ENCODE measurements at regions of chr1 and their contacts with region 1.

Region 1: GRCh38 chr1:178612261-178612660 is 99.4 kb downstream of the TEX35 start:
- DNase-seq: no peak
- H3K4me3 ChIP-seq: no peak overlapping the region
- H3K27ac ChIP-seq: peak overlapping the region; percentile 96
- H3K27me3 ChIP-seq: no peaks in the 10 kb centered on the region
- CTCF ChIP-seq: no peak

Region 2: GRCh38 chr1:178532392-178532791 is 79.9 kb before region 1 on chr1:
- CTCF ChIA-PET with region 1: no interaction called
- POLR2A ChIA-PET with region 1: interaction called, 12 read pairs
- DNase-seq: peak; percentile 63
- H3K4me3 ChIP-seq: no peak overlapping the region
- H3K27ac ChIP-seq: no peak overlapping the region
- H3K27me3 ChIP-seq: no peaks in the 10 kb centered on the region
- CTCF ChIP-seq: peak; percentile 90

Region 3: DNA sequence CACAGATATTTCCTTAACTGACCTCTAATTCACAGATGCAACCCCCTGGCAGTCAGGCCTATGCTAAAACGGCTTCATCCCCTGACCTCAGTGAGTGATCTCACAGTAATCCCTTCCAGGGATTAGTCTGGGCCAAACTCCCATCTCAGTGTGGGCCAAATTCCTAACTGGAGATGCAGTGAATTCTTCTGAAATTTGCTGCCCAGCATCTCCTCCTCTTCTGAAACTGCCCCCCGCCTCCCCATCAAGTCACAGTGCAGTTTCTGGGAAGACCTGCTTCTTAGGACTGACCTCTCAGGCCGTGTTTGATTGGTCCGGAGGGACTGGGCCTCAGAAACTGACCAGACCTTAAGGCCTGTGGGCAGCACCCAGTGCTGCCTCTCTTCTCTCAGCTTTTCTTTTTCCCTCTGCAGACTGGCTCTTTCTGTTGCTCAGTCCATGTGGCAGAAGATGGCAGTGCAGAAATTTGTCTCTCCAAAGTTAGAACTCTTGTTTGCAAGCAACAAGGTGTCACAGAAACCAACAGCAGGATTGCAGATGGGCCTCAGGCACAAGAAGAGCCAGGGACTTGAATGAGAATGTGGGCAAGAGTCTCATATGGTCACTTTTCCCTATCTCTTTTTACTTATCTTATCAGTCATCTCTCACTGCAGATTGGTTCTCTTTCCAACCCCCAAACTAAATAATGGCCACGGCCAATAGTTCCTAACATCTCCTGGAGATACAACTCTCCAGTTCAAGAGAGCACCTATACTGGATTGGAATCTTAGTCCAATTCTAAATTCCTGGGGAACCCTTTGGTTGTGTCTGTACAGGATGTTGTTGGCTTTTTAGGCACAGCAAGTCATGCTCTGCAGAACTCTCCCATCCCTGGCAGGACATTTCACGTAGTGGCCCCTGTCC is 17.2 kb after region 1 on chr1:
- CTCF ChIA-PET with region 1: no interaction called
- POLR2A ChIA-PET with region 1: interaction called, 11 read pairs
- DNase-seq: peak; percentile 67
- H3K4me3 ChIP-seq: no peak overlapping the region
- H3K27ac ChIP-seq: peak overlapping the region; percentile 88
- H3K27me3 ChIP-seq: no peaks in the 10 kb centered on the region
- CTCF ChIP-seq: no peak

Region 4: GRCh38 chr1:178684542-178685000 is 72.3 kb after region 1 on chr1:
- CTCF ChIA-PET with region 1: interaction called, 4 read pairs
- POLR2A ChIA-PET with region 1: interaction called, 13 read pairs
- DNase-seq: peak; percentile 76
- H3K4me3 ChIP-seq: no peak overlapping the region
- H3K27ac ChIP-seq: peak overlapping the region; percentile 73
- H3K27me3 ChIP-seq: no peaks in the 10 kb centered on the region
- CTCF ChIP-seq: no peak

Region 5: DNA sequence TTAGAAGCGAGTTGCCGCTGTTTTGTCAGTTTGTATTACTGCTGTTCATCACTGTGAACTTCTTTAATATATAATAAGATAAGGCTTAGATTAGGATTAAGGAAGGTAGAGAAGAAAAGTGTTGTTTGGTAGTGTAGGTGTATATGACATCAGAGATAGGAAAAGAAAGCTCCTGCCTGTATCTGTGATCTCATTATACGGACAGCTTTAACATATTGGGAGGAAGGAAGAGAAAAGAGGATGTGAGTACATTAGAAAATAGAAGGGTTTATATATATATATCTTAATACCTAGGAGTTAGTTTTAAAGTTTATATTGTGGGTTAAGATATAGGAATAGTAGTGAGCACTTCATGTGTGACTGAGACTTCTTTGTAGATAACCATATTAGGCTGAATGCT is 183.8 kb after region 1 on chr1:
- CTCF ChIA-PET with region 1: no interaction called
- POLR2A ChIA-PET with region 1: no interaction called
- DNase-seq: no peak
- H3K4me3 ChIP-seq: no peak overlapping the region
- H3K27ac ChIP-seq: no peak overlapping the region
- H3K27me3 ChIP-seq: no peaks in the 10 kb centered on the region
- CTCF ChIP-seq: no peak

Measured in AG04450 (cell line).